GM10248 (cell line): ENCODE measurements at regions of chr2 and their contacts with region 1.

Region 1: DNA sequence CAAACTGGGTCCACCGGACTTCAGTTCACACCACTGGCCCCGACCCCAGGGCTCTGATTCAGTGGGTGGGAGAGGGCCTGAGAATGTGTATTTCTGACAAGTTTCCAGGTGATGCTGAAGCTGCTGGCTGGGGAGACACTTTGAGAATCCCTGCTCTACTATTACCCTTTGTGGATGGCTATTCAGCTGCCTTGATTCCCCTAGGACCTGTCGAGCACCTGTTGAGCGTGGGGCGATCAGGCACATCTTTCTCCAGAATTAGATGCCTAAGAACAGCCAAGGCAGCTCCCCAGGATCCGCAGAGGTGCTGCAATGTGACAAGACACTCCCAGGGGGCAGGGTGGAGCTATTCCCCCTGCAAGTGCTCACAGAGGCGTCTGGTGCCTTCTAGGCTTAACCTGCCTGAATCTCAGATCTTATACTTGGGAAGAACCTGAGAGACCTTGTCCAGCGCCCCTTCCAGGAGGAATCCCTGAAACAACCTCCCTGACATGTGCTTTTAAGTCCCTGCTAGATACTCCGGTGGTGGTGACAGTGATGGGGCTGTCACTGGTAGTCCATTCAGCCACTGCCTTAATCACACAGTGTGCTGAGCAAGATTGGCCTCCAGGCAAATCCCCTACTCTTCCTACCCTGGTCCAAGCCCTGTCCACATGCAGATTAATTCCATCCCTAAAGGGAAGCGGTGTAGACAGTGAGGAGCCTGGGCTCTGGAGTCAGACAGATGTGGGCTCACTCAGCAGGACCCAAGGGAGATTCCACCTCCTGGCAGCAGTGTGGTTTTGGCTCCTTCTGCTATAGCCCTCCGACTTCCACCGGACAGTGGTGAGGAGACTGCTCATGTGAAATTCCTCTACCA is 43.4 kb upstream of the OTOF start:
- DNase-seq: peak; percentile 48
- CTCF ChIP-seq: peak; percentile 24

Region 2: GRCh38 chr2:26223018-26223417 is 298.3 kb before region 1 on chr2:
- CTCF ChIA-PET with region 1: no interaction called
- POLR2A ChIA-PET with region 1: no interaction called
- DNase-seq: no peak
- CTCF ChIP-seq: no peak

Region 3: DNA sequence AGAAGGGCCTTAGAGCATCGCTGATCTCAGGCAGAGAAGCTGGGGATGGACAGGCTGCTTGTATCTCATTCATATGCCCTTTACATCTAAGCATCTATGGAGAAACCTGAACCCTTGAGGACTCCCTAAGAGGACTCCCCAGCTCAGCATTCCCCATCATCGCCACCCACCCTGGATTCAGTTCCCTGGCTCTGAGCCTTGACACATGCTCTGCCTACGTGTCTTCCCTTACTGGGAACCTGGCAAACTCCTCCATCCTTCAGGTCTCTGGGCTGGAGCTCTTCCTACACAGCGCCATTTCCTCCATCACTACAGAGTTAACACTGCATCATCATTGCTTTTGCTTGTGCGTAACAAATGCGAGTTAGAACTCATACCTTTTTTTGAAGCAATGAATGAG is 12.1 kb before region 1 on chr2:
- CTCF ChIA-PET with region 1: interaction called, 12 read pairs
- POLR2A ChIA-PET with region 1: no interaction called
- DNase-seq: no peak
- CTCF ChIP-seq: no peak